ENCODE measurements at regions of chr1 and their contacts with region 1.

Region 1: DNA sequence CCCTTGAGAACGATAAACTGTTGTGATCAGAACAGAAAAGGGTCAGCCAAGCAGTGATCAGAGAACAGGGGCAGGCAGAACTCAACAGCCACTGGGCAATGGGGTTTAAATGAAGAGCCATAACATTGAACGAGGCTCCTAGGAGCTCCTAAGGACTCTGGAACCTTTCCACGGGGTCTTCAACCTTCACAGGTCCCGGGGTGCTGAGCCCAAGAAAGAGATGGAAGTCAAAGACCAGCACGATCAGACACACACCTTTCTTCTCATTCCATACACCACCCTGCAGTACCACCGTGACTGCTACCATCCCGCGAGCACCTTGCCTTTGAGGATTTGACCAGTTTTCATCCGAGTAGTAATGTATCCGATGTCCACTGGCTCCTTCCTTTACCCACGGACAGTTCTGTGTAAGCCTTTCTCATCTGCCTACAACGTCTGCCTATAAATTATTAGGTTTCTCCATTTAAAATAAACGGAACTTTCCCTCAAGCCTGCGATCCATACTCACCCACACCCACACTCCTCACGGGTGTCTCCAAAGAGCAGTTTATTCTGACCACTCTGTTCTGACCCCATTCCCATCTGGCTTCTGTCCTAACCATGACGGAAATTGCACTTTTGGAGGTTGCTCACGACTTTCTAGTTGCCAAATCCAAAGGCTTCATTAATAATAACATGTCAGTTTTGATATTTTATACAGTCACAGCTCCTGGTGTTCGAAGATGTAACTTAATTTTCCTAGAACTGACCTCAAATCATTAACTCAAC is 16.8 kb upstream of the HHAT start:
- DNase-seq: no peak
- ATAC-seq: peak; percentile 4; the same call in 1 of the 2 replicates
- H3K4me3 ChIP-seq: peak overlapping the region; percentile 68
- H3K27ac ChIP-seq: no peak overlapping the region
- H3K4me1 ChIP-seq: 0 out of 2 replicates have a peak, but pooled peaks cover 5% of the 10 kb centered on the region
- H3K27me3 ChIP-seq: 0 out of 2 replicates have a peak, but pooled peaks cover 2% of the 10 kb centered on the region
- CTCF ChIP-seq: no peak

Region 2: DNA sequence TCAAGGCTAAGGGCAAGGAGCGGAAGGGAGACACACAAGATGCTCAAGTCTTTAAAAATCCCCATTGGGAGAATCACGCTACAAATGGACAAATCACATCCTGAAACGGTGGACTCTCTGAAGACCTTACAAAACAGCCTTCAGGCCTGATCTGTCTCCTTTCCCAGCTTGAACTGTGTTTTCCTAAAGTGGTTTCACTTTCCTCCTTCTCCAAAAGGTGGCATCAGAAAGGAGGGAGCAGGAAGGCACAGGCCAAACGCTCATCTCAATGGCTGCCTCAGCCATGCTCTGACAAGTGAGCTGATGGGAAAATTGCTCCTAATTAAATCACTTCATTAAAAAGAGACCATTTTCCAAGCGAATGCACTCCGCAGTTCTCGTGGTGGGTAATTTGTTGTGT is 436.4 kb before region 1 on chr1:
- CTCF ChIA-PET with region 1: no interaction called
- POLR2A ChIA-PET with region 1: no interaction called
- intact Hi-C with region 1: loop called (anchors 10 kb)
- DNase-seq: peak; percentile 72
- ATAC-seq: peak; percentile 47
- H3K4me3 ChIP-seq: no peak overlapping the region
- H3K27ac ChIP-seq: no peak overlapping the region
- H3K4me1 ChIP-seq: peaks cover 46% of the 10 kb centered on the region
- H3K27me3 ChIP-seq: no peaks in the 10 kb centered on the region
- CTCF ChIP-seq: peak; percentile 78

Region 3: GRCh38 chr1:210024996-210025395 is 286.9 kb before region 1 on chr1:
- CTCF ChIA-PET with region 1: no interaction called
- POLR2A ChIA-PET with region 1: no interaction called
- intact Hi-C with region 1: loop called (anchors 5 kb)
- DNase-seq: no peak
- ATAC-seq: no peak
- H3K4me3 ChIP-seq: no peak overlapping the region
- H3K27ac ChIP-seq: no peak overlapping the region
- H3K4me1 ChIP-seq: no peaks in the 10 kb centered on the region
- H3K27me3 ChIP-seq: no peaks in the 10 kb centered on the region
- CTCF ChIP-seq: peak; percentile 38

Region 4: GRCh38 chr1:210143465-210144062 is 168.3 kb before region 1 on chr1:
- CTCF ChIA-PET with region 1: interaction called, 7 read pairs
- POLR2A ChIA-PET with region 1: no interaction called
- intact Hi-C with region 1: loop called (anchors 1 kb)
- DNase-seq: peak; percentile 95
- ATAC-seq: peak; percentile 76
- H3K4me3 ChIP-seq: no peak overlapping the region
- H3K27ac ChIP-seq: no peak overlapping the region
- H3K4me1 ChIP-seq: 0 out of 2 replicates have a peak, but pooled peaks cover 5% of the 10 kb centered on the region
- H3K27me3 ChIP-seq: no peaks in the 10 kb centered on the region
- CTCF ChIP-seq: peak; percentile 91

Region 5: DNA sequence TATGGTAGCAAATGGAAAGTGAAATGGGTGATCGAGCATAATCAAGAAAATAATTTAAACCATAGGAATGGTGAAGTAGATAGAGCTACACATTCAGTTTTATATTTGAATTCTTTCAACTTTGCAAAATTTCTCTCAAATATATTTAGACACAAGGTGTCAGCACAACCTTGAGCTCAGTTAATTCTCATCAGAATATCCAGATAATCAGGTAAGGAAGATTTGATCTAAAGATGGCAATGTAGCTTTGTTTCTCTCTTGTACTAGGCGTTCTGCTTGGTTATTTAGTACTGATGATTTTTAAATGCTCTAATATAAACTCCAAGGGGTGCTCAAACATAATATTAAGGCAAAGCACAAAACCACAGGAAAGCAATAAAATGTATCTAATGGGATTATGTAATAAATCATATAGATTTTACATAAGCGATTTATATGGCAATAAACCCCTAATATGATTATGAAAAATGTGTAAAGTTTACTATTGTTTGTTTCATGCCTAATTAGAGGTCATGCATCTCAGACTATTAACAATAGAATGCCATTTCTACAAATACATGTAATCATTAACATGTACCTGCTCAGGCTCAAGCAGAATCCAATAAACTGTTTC is 111.7 kb before region 1 on chr1:
- CTCF ChIA-PET with region 1: interaction called, 7 read pairs
- POLR2A ChIA-PET with region 1: no interaction called
- intact Hi-C with region 1: loop called (anchors 1 kb)
- DNase-seq: peak; percentile 23
- ATAC-seq: no peak
- H3K4me3 ChIP-seq: no peak overlapping the region
- H3K27ac ChIP-seq: no peak overlapping the region
- H3K4me1 ChIP-seq: peaks cover 6% of the 10 kb centered on the region; the same call in 1 of the 2 replicates
- H3K27me3 ChIP-seq: no peaks in the 10 kb centered on the region
- CTCF ChIP-seq: 0 out of 2 replicates have a peak, but pooled peaks have one; percentile 29

Region 6: GRCh38 chr1:210239349-210240111 is 72.4 kb before region 1 on chr1:
- CTCF ChIA-PET with region 1: no interaction called
- POLR2A ChIA-PET with region 1: no interaction called
- intact Hi-C with region 1: loop called (anchors 2 kb)
- DNase-seq: peak; percentile 95
- ATAC-seq: peak; percentile 88
- H3K4me3 ChIP-seq: no peak overlapping the region
- H3K27ac ChIP-seq: no peak overlapping the region
- H3K4me1 ChIP-seq: peaks cover 27% of the 10 kb centered on the region
- H3K27me3 ChIP-seq: no peaks in the 10 kb centered on the region
- CTCF ChIP-seq: peak; percentile 61

Region 7: DNA sequence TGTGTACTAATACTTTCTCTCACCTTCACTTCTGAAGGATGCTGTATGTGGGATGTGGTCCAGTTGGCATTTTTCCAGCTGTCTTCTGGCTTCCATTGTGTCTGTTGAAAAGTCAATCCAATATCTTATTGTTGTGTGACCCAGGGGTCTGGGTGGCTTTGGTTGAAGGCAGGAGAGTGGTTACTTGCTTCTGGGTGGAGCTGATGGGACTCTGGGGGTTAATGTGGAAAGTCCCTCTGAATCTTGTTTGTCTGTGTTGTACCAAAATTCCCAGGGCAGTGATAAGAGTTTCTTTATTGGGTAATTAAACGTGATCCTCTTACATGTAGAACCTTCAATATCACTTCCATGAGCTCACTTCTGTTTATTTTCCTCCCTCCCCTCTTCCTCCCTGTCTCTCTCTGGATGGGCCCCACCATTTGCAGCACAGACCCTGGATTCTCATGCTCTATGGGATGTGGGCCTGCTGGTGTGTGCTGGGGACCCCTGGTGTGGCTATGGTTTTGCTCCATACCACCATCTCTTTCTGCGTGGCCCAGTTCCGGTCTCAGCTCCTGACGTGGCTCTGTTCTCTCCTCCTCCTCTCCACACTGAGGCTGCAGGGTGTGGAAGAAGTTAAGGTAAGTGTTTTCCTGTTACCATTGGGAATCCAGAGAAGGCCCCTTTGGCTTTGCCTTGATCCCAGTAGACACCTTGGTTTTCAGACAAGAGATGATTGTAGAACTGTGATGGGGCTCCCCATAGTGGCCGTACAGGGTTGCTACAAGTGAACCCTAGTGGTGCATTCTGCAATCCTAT is 88.3 kb after region 1 on chr1:
- CTCF ChIA-PET with region 1: no interaction called
- POLR2A ChIA-PET with region 1: no interaction called
- intact Hi-C with region 1: loop called (anchors 5 kb)
- DNase-seq: peak; percentile 81
- ATAC-seq: peak; percentile 98
- H3K4me3 ChIP-seq: no peak overlapping the region
- H3K27ac ChIP-seq: 0 out of 2 replicates have a peak overlapping the region, but pooled peaks have one; percentile 16
- H3K4me1 ChIP-seq: peaks cover 9% of the 10 kb centered on the region
- H3K27me3 ChIP-seq: no peaks in the 10 kb centered on the region
- CTCF ChIP-seq: peak; percentile 97